IMR-90 (cell line): ENCODE measurements at regions of chr1 and their contacts with region 1.

Region 1: DNA sequence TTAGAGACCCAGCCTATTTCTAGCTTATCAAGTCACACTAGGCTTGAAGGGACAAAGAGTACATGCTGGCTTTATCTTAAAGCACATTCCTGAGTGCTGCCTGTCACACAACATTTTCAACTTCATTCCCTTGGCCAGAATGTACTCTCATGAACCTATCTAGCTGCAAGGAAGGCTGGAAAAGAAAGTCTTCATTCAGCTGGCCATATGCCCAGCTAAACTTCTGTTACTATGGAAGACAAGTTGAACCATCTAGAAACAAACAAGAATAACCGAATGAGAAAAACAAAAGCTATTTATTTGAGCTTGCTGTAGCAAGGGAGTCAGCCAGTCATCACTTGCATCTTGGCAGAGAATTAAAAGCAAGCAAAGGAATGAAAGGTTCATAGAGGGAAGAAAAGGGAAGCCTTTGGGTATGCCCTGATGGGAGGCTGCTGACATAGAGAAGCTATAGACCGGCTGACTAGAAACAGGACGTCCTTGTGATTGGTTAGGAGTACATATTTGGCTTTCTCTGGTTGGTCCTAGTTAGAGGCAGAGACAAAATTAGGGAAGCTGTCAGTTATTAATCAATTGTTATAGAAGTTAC is 108.4 kb downstream of the NEK7 start:
- DNase-seq: peak; percentile 51
- ATAC-seq: no peak
- H3K4me3 ChIP-seq: no peak overlapping the region
- H3K27ac ChIP-seq: no peak overlapping the region
- H3K4me1 ChIP-seq: peaks cover 13% of the 10 kb centered on the region
- H3K27me3 ChIP-seq: no peaks in the 10 kb centered on the region
- CTCF ChIP-seq: no peak
- POLR2A ChIP-seq: no peak
- RAD21 ChIP-seq: no peak

Region 2: DNA sequence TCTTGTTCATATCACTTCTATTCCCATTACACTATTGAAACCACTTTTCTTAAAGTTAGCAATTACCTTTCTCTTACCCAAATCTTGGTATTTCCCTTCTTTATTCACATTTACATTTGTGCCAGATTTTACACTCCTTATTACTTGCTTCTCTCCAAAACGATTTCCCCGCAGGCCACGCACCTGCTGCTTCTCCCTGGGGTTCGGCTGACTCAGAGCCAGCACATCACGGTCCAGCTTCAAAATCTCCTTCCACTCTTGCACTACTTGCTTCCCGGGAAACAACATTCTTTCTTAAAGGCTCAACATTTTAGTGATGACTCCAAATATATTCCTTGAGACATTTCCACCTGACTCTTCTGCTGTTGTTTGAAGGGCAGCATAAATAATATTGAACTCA is 327.3 kb before region 1 on chr1:
- CTCF ChIA-PET with region 1: no interaction called
- POLR2A ChIA-PET with region 1: no interaction called
- dilution Hi-C with region 1: no loop called
- in situ Hi-C with region 1: no loop called
- intact Hi-C with region 1: no loop called
- DNase-seq: no peak
- ATAC-seq: no peak
- H3K4me3 ChIP-seq: no peak overlapping the region
- H3K27ac ChIP-seq: no peak overlapping the region
- H3K4me1 ChIP-seq: no peaks in the 10 kb centered on the region
- H3K27me3 ChIP-seq: no peaks in the 10 kb centered on the region
- CTCF ChIP-seq: no peak
- POLR2A ChIP-seq: no peak
- RAD21 ChIP-seq: no peak

Region 3: DNA sequence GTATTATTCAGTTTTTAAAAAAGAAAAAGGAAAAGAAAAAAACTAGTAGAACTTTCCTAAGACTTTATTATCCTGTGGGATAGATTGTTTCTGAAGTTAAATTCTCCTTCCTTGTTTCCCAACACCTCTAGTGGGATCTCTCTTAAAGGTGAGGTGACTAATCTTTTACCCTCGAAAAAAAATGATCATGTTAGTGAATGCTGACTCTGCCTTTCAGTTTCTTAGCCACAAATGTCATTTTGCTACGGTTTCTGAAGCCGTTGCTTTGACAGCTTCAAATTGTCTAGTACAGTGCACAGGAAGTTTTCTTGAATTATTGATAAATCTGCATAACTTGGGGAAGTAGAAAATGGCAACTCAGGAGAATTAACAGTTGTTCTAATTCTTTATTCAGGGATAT is 121.4 kb before region 1 on chr1:
- CTCF ChIA-PET with region 1: no interaction called
- POLR2A ChIA-PET with region 1: no interaction called
- dilution Hi-C with region 1: no loop called
- in situ Hi-C with region 1: no loop called
- intact Hi-C with region 1: no loop called
- DNase-seq: no peak
- ATAC-seq: no peak
- H3K4me3 ChIP-seq: no peak overlapping the region
- H3K27ac ChIP-seq: no peak overlapping the region
- H3K4me1 ChIP-seq: no peaks in the 10 kb centered on the region
- H3K27me3 ChIP-seq: no peaks in the 10 kb centered on the region
- CTCF ChIP-seq: no peak
- POLR2A ChIP-seq: no peak
- RAD21 ChIP-seq: no peak

Region 4: DNA sequence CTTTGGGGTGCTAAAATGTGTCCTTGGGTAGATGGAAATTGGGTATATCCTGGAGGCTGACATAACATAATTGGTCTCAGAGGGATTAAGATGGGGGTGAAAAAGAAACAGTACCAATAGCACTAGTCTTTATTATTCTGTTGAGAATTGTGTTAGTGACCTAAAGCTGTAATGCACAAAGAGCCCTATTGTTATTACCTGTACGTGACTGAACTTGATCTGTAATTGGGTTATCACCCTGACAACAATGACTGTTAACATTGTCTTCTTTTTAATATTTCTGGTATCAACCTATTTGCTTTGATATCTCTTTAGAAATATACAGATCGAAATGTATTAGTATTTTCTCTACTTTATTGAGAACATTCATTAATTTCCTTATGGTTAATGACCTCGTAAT is 39.3 kb after region 1 on chr1:
- CTCF ChIA-PET with region 1: no interaction called
- POLR2A ChIA-PET with region 1: no interaction called
- dilution Hi-C with region 1: no loop called
- in situ Hi-C with region 1: no loop called
- intact Hi-C with region 1: no loop called
- DNase-seq: no peak
- ATAC-seq: no peak
- H3K4me3 ChIP-seq: no peak overlapping the region
- H3K27ac ChIP-seq: no peak overlapping the region
- H3K4me1 ChIP-seq: no peaks in the 10 kb centered on the region
- H3K27me3 ChIP-seq: no peaks in the 10 kb centered on the region
- CTCF ChIP-seq: no peak
- POLR2A ChIP-seq: no peak
- RAD21 ChIP-seq: no peak

Region 5: DNA sequence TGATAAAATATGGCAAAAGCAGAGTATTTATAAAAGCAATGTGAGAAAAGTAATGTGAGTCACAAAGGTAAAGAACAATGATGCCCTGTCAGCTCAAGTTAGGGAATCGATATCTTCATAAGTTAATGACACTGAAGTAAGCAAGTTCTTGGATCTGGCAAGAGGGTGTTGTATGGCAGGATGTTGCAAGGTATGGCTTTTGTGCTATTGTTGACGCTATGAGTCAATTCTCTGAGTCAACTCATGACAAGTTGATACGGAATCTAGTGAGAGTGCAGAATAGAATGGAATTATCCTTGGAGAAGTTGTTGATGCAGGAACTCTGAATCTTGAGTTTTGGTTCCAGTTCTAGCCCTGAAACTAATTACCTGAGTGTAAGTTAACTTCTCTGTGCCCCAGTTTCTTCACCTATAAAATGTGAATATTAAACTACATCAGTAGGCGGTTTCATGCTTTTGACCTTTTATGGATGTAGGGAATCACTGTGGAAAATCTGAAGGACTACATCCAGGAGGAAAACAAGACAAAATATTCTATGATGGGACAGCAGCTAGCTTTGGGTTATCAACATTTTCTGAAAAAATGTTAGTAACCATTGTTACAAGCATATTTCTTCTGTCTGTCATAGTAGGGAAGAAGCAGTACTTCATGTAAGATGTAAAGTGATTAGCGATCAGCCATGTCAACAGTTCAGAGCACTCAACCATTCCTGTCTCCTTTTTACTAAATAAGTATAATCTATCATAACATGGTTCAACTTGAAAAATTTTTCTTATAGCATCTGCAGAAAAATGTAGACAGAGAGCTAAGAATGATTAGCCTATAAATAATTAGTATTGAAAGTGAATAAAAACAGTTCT is 178.4 kb after region 1 on chr1:
- CTCF ChIA-PET with region 1: no interaction called
- POLR2A ChIA-PET with region 1: no interaction called
- dilution Hi-C with region 1: no loop called
- in situ Hi-C with region 1: loop called (anchors 10 kb)
- intact Hi-C with region 1: no loop called
- DNase-seq: peak; percentile 98
- ATAC-seq: peak; percentile 87
- H3K4me3 ChIP-seq: no peak overlapping the region
- H3K27ac ChIP-seq: no peak overlapping the region
- H3K4me1 ChIP-seq: no peaks in the 10 kb centered on the region; the same call in 1 of the 2 replicates
- H3K27me3 ChIP-seq: no peaks in the 10 kb centered on the region
- CTCF ChIP-seq: no peak
- POLR2A ChIP-seq: no peak
- RAD21 ChIP-seq: peak; percentile 26; the same call in 1 of the 2 replicates